ENCODE measurements at regions of chr16 and their contacts with region 1.

Region 1: GRCh38 chr16:31032736-31033708 is at the start of gene STX4:
- DNase-seq: peak; percentile 93 to 100 (median 97)
- ATAC-seq: peak; percentile 73
- H3K4me3 ChIP-seq: peak within 1 kb of the TSS; percentile 84 to 88
- H3K4me3 Mint-ChIP-seq: peak within 1 kb of the TSS; percentile 98
- H3K27ac ChIP-seq: peak within 1 kb of the TSS; percentile 98 to 99
- H3K27ac Mint-ChIP-seq: peak within 1 kb of the TSS; percentile 99
- H3K4me1 ChIP-seq: peaks cover 18% of the 10 kb centered on the region
- H3K4me1 Mint-ChIP-seq: peaks cover 28% of the 10 kb centered on the region
- H3K27me3 ChIP-seq: no peaks in the 10 kb centered on the region
- H3K27me3 Mint-ChIP-seq: no peaks in the 10 kb centered on the region
- CTCF ChIP-seq: no peak
- total RNA-seq, gene STX4: 63.8 to 69.9 TPM

Region 2: GRCh38 chr16:30997000-30997886 is 35.8 kb before region 1 on chr16:
- CTCF ChIA-PET with region 1: no interaction called
- POLR2A ChIA-PET with region 1: no interaction called
- intact Hi-C with region 1: loop called (anchors 1 to 2 kb)
- DNase-seq: peak; percentile 67 to 88 (median 80)
- ATAC-seq: peak; percentile 99
- H3K4me3 ChIP-seq: peak overlapping the region; percentile 61 to 93
- H3K4me3 Mint-ChIP-seq: peak overlapping the region; percentile 85
- H3K27ac ChIP-seq: peak overlapping the region; percentile 40 to 55
- H3K27ac Mint-ChIP-seq: peak overlapping the region; percentile 90
- H3K4me1 ChIP-seq: peaks cover 11% of the 10 kb centered on the region
- H3K4me1 Mint-ChIP-seq: peaks cover 10% of the 10 kb centered on the region
- H3K27me3 ChIP-seq: no peaks in the 10 kb centered on the region
- H3K27me3 Mint-ChIP-seq: no peaks in the 10 kb centered on the region
- CTCF ChIP-seq: no peak

Region 3: DNA sequence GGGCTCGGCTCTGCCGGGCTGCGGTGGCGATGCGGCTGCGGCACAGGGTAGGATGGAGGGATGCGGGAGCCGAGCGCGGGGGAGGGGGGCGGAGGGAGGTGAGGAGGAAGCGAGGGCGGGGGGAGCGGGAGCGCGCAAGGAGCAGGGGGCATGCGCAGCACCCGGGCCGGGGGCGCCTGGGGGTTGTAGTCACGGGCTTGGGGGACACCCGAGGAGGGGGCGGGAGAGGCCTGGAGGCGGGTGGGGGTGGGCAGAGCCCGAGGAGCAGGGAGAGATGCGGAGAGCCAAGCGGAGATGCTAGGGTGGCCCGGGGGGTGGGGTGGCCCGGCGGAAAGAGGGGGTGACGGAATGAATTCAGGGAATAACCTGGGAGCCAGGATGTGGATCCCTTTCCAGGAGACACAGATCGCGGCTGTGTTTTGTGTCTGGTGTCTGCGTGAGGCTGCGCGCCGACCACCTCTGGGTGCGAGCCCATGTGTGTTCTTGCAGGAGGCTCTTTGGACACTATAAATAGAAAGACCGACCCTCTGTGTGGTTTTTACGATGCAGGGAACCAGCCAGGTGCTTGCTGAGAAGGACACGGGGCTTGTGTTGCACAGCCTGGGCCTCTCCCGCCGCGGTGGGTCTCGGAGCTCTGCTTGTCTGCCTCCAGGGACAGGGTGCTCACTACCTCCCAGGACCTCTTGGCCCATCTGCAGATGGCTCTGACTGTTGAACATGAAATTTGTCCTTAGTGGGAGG is 22.3 kb before region 1 on chr16 and contains the start of gene STX1B:
- CTCF ChIA-PET with region 1: interaction called, 4 read pairs
- POLR2A ChIA-PET with region 1: no interaction called
- intact Hi-C with region 1: loop called in 1 of 2 experiments (anchors 1 kb)
- DNase-seq: peak in 8 of 9 experiments; percentile 42 to 73 (median 62)
- ATAC-seq: peak; percentile 86
- H3K4me3 ChIP-seq: peak within 1 kb of the TSS; percentile 35 to 61
- H3K4me3 Mint-ChIP-seq: peak within 1 kb of the TSS; percentile 84
- H3K27ac ChIP-seq: no peak within 1 kb of the TSS
- H3K27ac Mint-ChIP-seq: no peak within 1 kb of the TSS
- H3K4me1 ChIP-seq: peaks cover 7% of the 10 kb centered on the region
- H3K4me1 Mint-ChIP-seq: peaks cover 19% of the 10 kb centered on the region
- H3K27me3 ChIP-seq: peaks cover 3 to 17% of the 10 kb centered on the region in 2 experiments
- H3K27me3 Mint-ChIP-seq: peaks cover 21% of the 10 kb centered on the region
- CTCF ChIP-seq: no peak
- total RNA-seq, gene STX1B: 2.3 to 2.7 TPM

Region 4: GRCh38 chr16:31094424-31095120 is 61.5 kb after region 1 on chr16 and contains the start of gene VKORC1:
- CTCF ChIA-PET with region 1: no interaction called
- POLR2A ChIA-PET with region 1: no interaction called
- intact Hi-C with region 1: loop called (anchors 1 kb)
- DNase-seq: peak; percentile 65 to 93 (median 85)
- ATAC-seq: peak; percentile 86
- H3K4me3 ChIP-seq: peak within 1 kb of the TSS; percentile 72 to 91
- H3K4me3 Mint-ChIP-seq: peak within 1 kb of the TSS; percentile 93
- H3K27ac ChIP-seq: peak within 1 kb of the TSS; percentile 69 to 74
- H3K27ac Mint-ChIP-seq: peak within 1 kb of the TSS; percentile 91
- H3K4me1 ChIP-seq: peaks cover 19% of the 10 kb centered on the region
- H3K4me1 Mint-ChIP-seq: peaks cover 25% of the 10 kb centered on the region
- H3K27me3 ChIP-seq: no peaks in the 10 kb centered on the region
- H3K27me3 Mint-ChIP-seq: no peaks in the 10 kb centered on the region
- CTCF ChIP-seq: no peak
- total RNA-seq, gene VKORC1: 23.0 to 27.2 TPM

Region 5: GRCh38 chr16:31108035-31108793 is 75.2 kb after region 1 on chr16 and contains the start of gene BCKDK:
- CTCF ChIA-PET with region 1: no interaction called
- POLR2A ChIA-PET with region 1: no interaction called
- intact Hi-C with region 1: loop called in 1 of 2 experiments (anchors 5 kb)
- DNase-seq: peak; percentile 9 to 76 (median 58)
- ATAC-seq: peak; percentile 67
- H3K4me3 ChIP-seq: peak within 1 kb of the TSS; percentile 50 to 96
- H3K4me3 Mint-ChIP-seq: peak within 1 kb of the TSS; percentile 87
- H3K27ac ChIP-seq: peak within 1 kb of the TSS; percentile 54 to 64
- H3K27ac Mint-ChIP-seq: peak within 1 kb of the TSS; percentile 84
- H3K4me1 ChIP-seq: peaks cover 15% of the 10 kb centered on the region
- H3K4me1 Mint-ChIP-seq: peaks cover 17% of the 10 kb centered on the region
- H3K27me3 ChIP-seq: no peaks in the 10 kb centered on the region
- H3K27me3 Mint-ChIP-seq: no peaks in the 10 kb centered on the region
- CTCF ChIP-seq: no peak
- total RNA-seq, gene BCKDK: 5.6 to 7.6 TPM

Region 6: DNA sequence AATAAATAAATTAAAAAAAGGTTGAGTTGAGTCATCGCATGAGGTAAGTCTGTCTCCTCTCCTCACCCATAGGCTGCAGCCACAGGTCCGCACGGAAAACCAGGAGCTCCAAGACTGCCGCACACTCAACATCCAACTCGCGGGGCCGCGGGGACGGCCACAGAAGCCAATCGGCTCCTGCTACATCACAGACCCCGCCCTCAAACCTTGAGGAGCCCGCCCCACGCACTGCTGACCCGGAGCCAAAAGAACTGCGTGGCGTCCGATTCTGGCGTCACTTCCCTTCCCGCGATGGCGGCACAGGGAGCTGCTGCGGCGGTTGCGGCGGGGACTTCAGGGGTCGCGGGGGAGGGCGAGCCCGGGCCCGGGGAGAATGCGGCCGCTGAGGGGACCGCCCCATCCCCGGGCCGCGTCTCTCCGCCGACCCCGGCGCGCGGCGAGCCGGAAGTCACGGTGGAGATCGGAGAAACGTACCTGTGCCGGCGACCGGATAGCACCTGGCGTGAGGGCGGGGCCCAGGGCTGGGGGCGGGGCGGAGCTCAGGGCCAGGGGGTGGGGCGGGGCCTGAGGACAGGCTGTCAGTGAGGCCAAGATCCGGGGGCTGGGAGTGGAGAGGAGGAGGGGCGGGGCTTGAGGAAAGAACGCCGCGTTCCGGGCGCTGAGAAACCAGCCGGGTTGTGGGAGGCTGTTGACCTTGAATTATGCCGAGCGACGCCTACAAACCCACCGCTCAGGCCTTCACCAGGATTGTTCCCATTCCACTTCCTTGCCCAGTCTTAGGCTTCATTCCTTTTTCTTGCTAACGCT is 84.6 kb after region 1 on chr16 and contains the start of gene KAT8:
- CTCF ChIA-PET with region 1: no interaction called
- POLR2A ChIA-PET with region 1: interaction called, 3 read pairs
- intact Hi-C with region 1: loop called in 1 of 2 experiments (anchors 1 kb)
- DNase-seq: peak; percentile 92 to 99 (median 97)
- ATAC-seq: peak; percentile 92
- H3K4me3 ChIP-seq: peak within 1 kb of the TSS; percentile 53 to 93
- H3K4me3 Mint-ChIP-seq: peak within 1 kb of the TSS; percentile 74
- H3K27ac ChIP-seq: peak within 1 kb of the TSS; percentile 83 to 96
- H3K27ac Mint-ChIP-seq: peak within 1 kb of the TSS; percentile 95
- H3K4me1 ChIP-seq: peaks cover 11% of the 10 kb centered on the region
- H3K4me1 Mint-ChIP-seq: peaks cover 18% of the 10 kb centered on the region
- H3K27me3 ChIP-seq: no peaks in the 10 kb centered on the region
- H3K27me3 Mint-ChIP-seq: no peaks in the 10 kb centered on the region
- CTCF ChIP-seq: no peak
- total RNA-seq, gene KAT8: 105 to 107 TPM